ENCODE measurements at regions of chr16 and their contacts with region 1.

Region 1: GRCh38 chr16:48687421-48688038 is 77.5 kb upstream of the N4BP1 start:
- H3K4me3 ChIP-seq: no peak overlapping the region
- H3K27ac ChIP-seq: no peak overlapping the region
- H3K4me1 ChIP-seq: no peaks in the 10 kb centered on the region
- CTCF ChIP-seq: peak; percentile 54

Region 2: GRCh38 chr16:49352892-49353291 is 665.4 kb after region 1 on chr16:
- CTCF ChIA-PET with region 1: interaction called, 23 read pairs
- POLR2A ChIA-PET with region 1: no interaction called
- H3K4me3 ChIP-seq: no peak overlapping the region
- H3K27ac ChIP-seq: no peak overlapping the region
- H3K4me1 ChIP-seq: no peaks in the 10 kb centered on the region
- CTCF ChIP-seq: no peak

Measured in HEK293 (cell line).